ENCODE measurements at regions of chr15 and their contacts with region 1.

Region 1: GRCh38 chr15:60585743-60586708 is 107.1 kb upstream of the ICE2 start:
- DNase-seq: peak; percentile 76
- H3K4me3 Mint-ChIP-seq: no peak overlapping the region
- H3K27ac Mint-ChIP-seq: no peak overlapping the region
- H3K4me1 Mint-ChIP-seq: peaks cover 9% of the 10 kb centered on the region
- H3K27me3 Mint-ChIP-seq: peaks cover 38% of the 10 kb centered on the region
- CTCF ChIP-seq: peak; percentile 76

Region 2: GRCh38 chr15:60720493-60721256 is 134.6 kb after region 1 on chr15:
- CTCF ChIA-PET with region 1: no interaction called
- intact Hi-C with region 1: loop called (anchors 5 kb)
- DNase-seq: peak; percentile 40
- H3K4me3 Mint-ChIP-seq: peak overlapping the region; percentile 33
- H3K27ac Mint-ChIP-seq: peak overlapping the region; percentile 55
- H3K4me1 Mint-ChIP-seq: peaks cover 40% of the 10 kb centered on the region
- H3K27me3 Mint-ChIP-seq: no peaks in the 10 kb centered on the region
- CTCF ChIP-seq: no peak

Region 3: GRCh38 chr15:60916679-60917460 is 330.8 kb after region 1 on chr15:
- CTCF ChIA-PET with region 1: interaction called, 18 read pairs
- intact Hi-C with region 1: loop called (anchors 1 kb)
- DNase-seq: peak; percentile 88
- H3K4me3 Mint-ChIP-seq: peak overlapping the region; percentile 37
- H3K27ac Mint-ChIP-seq: peak overlapping the region; percentile 88
- H3K4me1 Mint-ChIP-seq: peaks cover 34% of the 10 kb centered on the region
- H3K27me3 Mint-ChIP-seq: no peaks in the 10 kb centered on the region
- CTCF ChIP-seq: peak; percentile 84

Region 4: DNA sequence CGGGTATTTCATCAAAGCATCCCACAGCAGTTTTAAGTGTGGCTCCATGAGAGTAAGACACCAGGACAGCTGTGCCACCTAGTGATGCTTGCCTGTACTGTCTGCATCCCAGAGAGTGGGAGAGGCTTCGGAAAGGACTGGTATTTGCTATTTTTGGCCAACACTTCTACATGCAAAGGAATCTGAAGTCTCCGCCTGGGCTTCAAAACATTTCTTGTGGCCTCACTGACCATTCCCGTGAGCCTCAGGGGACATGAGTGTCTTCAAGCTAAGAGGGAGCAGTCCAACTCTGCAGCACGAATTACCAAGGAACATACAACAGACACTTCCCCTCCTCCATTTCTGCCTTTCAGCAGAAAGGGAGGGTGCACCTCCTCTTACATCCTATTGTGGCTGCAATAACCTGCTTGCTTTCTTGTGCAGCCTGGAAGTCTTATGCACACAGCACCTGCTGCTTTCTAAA is 465.6 kb after region 1 on chr15:
- CTCF ChIA-PET with region 1: interaction called, 5 read pairs
- intact Hi-C with region 1: loop called (anchors 2 kb)
- DNase-seq: peak; percentile 28
- H3K4me3 Mint-ChIP-seq: no peak overlapping the region
- H3K27ac Mint-ChIP-seq: no peak overlapping the region
- H3K4me1 Mint-ChIP-seq: peaks cover 9% of the 10 kb centered on the region
- H3K27me3 Mint-ChIP-seq: peaks cover 78% of the 10 kb centered on the region
- CTCF ChIP-seq: no peak

Measured in Calu3 (cell line).